ACHN (cell line): ENCODE measurements at regions of chr19 and their contacts with region 1.

Region 1: GRCh38 chr19:41691268-41691970 is 3.3 kb upstream of the CEACAM7 start:
- DNase-seq: no peak

Region 2: GRCh38 chr19:41501854-41502253 is 189.6 kb before region 1 on chr19:
- in situ Hi-C with region 1: no loop called
- DNase-seq: no peak

Region 3: GRCh38 chr19:41588497-41589209 is 102.8 kb before region 1 on chr19:
- in situ Hi-C with region 1: no loop called
- DNase-seq: peak; percentile 46

Region 4: GRCh38 chr19:41641879-41642485 is 49.4 kb before region 1 on chr19:
- in situ Hi-C with region 1: loop called (anchors 10 kb)
- DNase-seq: peak; percentile 50

Region 5: GRCh38 chr19:41795031-41795461 is 103.6 kb after region 1 on chr19:
- in situ Hi-C with region 1: no loop called
- DNase-seq: peak; percentile 33

Region 6: DNA sequence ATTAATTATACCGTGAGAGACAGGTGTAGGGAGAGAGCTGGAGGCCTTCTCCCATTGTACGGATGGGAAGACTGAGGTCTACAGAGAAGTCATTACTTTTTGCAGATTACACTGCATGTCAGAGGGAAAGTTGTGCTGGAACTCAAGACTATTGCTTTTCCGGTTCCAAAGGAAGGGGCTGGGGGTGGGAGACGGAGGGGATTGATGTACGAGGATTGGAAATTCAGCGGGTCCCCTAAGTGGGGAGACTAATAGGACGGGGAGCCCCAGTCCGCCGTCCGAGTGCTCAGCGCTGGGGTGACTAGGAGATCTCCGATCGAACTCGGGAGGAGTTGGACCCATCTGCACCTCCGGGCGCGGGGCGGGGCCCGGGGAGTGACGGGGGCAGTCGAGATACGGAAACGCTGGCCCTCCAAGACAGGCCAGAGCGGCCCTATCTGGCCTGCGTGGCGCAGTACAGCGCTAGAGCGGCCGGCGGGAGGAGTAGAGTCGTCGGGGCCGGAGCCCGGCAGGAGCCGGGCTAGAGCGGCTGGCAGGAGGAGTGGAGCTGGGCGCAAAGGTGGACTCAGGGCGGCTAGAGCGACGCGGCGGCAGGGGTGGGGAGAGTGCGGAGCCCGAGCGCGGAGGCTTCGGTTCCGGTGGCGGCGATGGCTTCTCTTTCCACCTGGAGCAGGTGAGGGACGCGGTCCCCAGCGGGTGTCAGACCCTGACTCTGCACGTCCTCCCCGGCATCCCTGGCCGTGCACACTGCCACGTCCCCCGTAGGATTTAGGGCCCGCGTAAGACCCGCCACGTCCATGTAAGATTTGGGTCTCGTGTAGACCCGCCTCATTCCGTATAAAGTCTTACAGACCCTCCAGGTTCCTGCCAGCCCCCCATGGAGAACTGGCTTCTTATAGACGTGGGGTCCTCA is 192.7 kb after region 1 on chr19:
- in situ Hi-C with region 1: no loop called
- DNase-seq: peak; percentile 94